ENCODE measurements at regions of chr21 and their contacts with region 1.

Region 1: DNA sequence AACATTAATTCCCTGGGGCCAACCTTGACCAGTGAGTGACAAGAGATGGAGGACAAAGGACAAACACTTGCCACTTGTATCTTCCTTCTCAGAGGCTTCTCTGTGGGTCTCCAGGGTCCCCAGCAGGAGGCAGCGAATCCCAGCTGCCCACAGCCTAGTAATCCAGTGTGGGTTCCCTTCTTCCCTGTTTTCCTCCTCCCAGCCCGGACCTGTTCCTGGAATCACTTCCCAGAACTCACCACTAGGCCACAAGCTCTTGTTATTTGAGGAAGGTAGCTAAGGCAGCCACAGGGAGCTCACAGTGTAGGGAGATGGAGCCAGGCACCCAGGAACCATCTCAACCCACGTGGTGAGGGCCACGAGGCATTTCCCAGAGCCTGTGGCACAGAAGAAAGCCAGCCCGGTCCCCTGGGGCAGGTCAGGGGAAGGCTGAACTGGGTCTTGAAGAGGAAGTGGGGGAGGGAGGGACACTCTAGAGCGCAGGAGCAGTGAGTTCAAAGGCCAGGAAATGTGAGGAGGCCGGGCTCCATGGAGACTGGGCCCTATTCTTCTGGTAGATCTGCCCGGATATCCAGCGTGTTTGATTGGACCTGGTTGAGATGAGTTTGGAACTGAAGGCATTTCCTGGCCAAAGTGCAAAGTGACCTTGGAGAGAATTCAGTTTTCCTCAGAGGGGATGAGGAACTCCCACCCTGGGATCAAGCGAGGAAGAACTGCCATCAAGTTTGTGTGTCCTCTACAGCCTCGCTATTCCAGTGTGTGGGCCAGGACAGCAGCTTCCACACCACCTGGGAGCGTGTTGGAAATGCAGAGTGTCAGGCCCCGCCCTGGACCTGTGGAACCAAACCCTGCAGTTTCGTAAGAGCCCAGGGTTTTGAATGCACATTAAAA is 20.3 kb upstream of the C2CD2 start:
- DNase-seq: no peak
- ATAC-seq: peak; percentile 83
- H3K4me3 Mint-ChIP-seq: no peak overlapping the region
- H3K27ac Mint-ChIP-seq: no peak overlapping the region; the same call in 1 of the 2 replicates
- H3K4me1 Mint-ChIP-seq: peaks cover 22% of the 10 kb centered on the region
- H3K27me3 Mint-ChIP-seq: no peaks in the 10 kb centered on the region; the same call in 1 of the 2 replicates
- CTCF ChIP-seq: no peak

Region 2: GRCh38 chr21:41961282-41961701 is 12.8 kb before region 1 on chr21:
- CTCF ChIA-PET with region 1: interaction called, 10 read pairs
- POLR2A ChIA-PET with region 1: no interaction called
- DNase-seq: no peak
- ATAC-seq: no peak
- H3K4me3 Mint-ChIP-seq: no peak overlapping the region
- H3K27ac Mint-ChIP-seq: no peak overlapping the region
- H3K4me1 Mint-ChIP-seq: peaks cover 18% of the 10 kb centered on the region
- H3K27me3 Mint-ChIP-seq: no peaks in the 10 kb centered on the region
- CTCF ChIP-seq: no peak

Measured in WTC11 (cell line).